CD14-positive monocyte (primary cell): ENCODE measurements at regions of chr15 and their contacts with region 1.

Region 1: GRCh38 chr15:82749951-82750830 is 40.5 kb upstream of the AP3B2 start:
- DNase-seq: peak; percentile 72 to 84 (median 80)
- H3K4me3 ChIP-seq: peak overlapping the region; percentile 56 to 94 (median 89)
- H3K4me3 Mint-ChIP-seq: peak overlapping the region; percentile 99 to 100
- H3K27ac ChIP-seq: peak overlapping the region; percentile 46 to 87
- H3K27ac Mint-ChIP-seq: peak overlapping the region; percentile 93 to 98 (median 97)
- H3K4me1 ChIP-seq: peaks cover 24 to 28% of the 10 kb centered on the region in 2 donors
- H3K4me1 Mint-ChIP-seq: peaks cover 31% of the 10 kb centered on the region
- H3K27me3 ChIP-seq: no peaks in the 10 kb centered on the region
- H3K27me3 Mint-ChIP-seq: peaks cover 0 to 2% (median 1%) of the 10 kb centered on the region in 3 donors
- CTCF ChIP-seq: no peak

Region 2: DNA sequence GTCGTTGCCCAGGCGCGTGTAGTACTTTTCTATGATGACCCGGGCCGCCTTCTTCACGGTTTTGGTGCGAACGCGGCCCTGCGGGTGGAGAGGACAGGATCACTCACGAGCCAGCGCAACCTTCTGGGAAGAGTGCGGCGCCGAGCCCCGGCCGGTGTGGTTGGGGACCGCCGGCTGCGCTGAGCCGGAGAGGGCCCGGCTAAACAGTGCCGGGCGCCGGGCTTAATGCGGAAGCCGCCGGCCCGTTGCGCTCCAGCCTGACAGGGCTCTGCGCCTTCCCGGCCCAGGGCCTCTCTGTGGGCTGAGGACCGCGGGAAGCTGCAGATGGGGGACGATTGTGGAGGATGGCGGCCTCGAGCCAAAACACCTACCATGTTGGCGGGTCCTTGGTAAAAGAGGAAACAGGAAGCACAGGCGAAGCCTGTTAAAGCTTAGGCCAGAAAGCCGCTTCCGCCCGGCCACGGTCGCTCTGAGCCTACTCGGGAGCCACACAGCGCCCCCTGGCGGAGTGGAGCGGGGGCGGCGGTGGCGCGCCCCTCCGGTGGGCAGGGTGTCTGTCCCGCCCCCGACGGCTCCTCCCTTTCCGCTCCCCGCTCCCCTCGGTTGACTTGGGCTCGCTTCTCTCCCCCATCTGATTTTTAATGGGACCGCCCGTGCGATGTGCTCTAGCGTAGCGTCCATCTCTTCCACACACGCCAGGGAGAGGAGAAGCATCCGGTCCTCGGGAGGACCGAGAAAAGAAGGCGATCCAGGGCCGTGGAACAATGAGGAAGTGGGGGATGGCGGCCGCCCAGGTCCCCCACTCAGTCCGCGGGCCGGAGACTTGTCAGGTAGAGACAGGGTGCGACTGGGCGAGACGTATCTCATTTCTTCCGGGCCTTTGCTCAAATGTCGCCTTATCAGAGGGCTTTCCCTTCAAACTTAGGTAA is 209.9 kb before region 1 on chr15 and contains the start of gene RPS17:
- intact Hi-C with region 1: loop called in 1 of 2 experiments (anchors 5 kb)
- DNase-seq: peak; percentile 94 to 97 (median 95)
- H3K4me3 ChIP-seq: peak within 1 kb of the TSS; percentile 70 to 98 (median 77)
- H3K4me3 Mint-ChIP-seq: peak within 1 kb of the TSS; percentile 97
- H3K27ac ChIP-seq: peak within 1 kb of the TSS; percentile 79 to 95
- H3K27ac Mint-ChIP-seq: peak within 1 kb of the TSS; percentile 92 to 96 (median 95)
- H3K4me1 ChIP-seq: peaks cover 19 to 26% of the 10 kb centered on the region in 2 donors
- H3K4me1 Mint-ChIP-seq: peaks cover 27% of the 10 kb centered on the region
- H3K27me3 ChIP-seq: peaks cover 0 to 3% of the 10 kb centered on the region in 2 donors
- H3K27me3 Mint-ChIP-seq: peaks cover 0 to 6% (median 2%) of the 10 kb centered on the region in 3 donors
- CTCF ChIP-seq: peak; percentile 99
- polyA plus RNA-seq, gene RPS17: 604 to 2,881 (median 619) TPM

Region 3: DNA sequence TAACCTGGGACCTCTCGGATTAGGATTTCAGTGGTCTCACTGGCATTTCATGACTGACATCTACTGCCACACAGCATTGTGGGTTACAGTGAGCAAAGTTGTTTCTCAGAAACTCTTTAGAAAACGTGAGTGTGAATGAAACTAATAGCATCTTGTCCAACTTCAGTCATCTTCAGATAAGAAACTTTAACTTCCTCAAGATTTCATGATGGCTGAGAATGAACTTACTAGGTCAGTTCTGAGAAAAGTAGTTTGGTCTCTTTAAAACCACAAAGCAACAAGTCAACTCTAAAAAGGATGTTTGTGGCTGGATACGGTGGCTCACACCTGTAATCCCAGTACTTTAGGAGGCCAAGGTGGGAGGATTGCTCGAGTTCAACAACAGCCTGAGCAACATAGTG is 216.5 kb after region 1 on chr15:
- intact Hi-C with region 1: no loop called
- DNase-seq: no peak
- H3K4me3 ChIP-seq: no peak overlapping the region
- H3K4me3 Mint-ChIP-seq: no peak overlapping the region
- H3K27ac ChIP-seq: no peak overlapping the region
- H3K27ac Mint-ChIP-seq: no peak overlapping the region
- H3K4me1 ChIP-seq: peaks cover 5 to 7% of the 10 kb centered on the region in 2 donors
- H3K4me1 Mint-ChIP-seq: peaks cover 21% of the 10 kb centered on the region
- H3K27me3 ChIP-seq: no peaks in the 10 kb centered on the region
- H3K27me3 Mint-ChIP-seq: peaks cover 2 to 3% (median 2%) of the 10 kb centered on the region in 3 donors
- CTCF ChIP-seq: no peak